ENCODE measurements at regions of chr2 and their contacts with region 1.

Region 1: DNA sequence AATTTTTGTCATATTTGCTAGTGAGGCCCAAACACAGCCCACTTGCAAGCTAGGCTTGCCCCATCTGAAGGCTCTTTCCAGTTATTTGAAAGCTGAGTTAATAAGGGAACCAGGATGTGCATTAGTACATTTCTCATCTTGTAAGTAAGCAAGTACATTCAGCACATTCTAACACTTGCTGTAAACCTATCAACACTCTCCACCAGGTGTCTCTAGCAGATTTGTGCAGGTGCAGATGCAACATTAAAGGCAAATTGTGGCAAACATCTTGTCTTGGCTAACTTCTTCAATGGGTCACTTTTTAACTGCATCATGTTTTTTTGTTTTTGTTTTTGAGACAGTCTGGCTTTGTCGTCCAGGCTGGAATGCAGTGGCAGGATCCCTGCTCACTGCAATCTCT is 25.3 kb upstream of the MFSD6 start:
- DNase-seq: no peak
- H3K4me3 ChIP-seq: no peak overlapping the region
- H3K27ac ChIP-seq: no peak overlapping the region
- H3K4me1 ChIP-seq: peaks cover 7% of the 10 kb centered on the region
- H3K27me3 ChIP-seq: no peaks in the 10 kb centered on the region
- CTCF ChIP-seq: peak; percentile 71

Region 2: DNA sequence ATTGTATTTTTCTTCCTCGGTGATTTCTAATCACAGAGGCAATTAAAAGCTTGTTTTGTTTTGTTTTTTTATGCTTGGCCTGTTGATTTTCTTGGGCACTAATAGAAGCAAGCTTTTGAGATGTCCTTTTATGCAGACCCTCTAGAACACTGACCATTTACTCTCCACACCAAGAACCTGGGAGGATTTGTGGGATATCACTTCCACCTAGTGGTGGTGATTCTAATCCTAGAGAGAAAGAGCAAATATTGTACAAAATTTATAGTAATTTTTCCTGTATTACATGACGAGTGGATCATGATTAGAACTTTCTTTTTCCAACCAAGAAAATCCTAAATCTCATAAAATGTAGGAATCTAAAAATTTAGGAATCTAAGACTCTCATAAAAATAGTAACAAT is 128.3 kb after region 1 on chr2:
- intact Hi-C with region 1: loop called (anchors 5 kb)
- DNase-seq: no peak
- H3K4me3 ChIP-seq: no peak overlapping the region
- H3K27ac ChIP-seq: no peak overlapping the region
- H3K4me1 ChIP-seq: peaks cover 8% of the 10 kb centered on the region
- H3K27me3 ChIP-seq: no peaks in the 10 kb centered on the region
- CTCF ChIP-seq: peak; percentile 67

Region 3: GRCh38 chr2:190583507-190584337 is 200.9 kb after region 1 on chr2:
- intact Hi-C with region 1: no loop called
- DNase-seq: peak; percentile 64
- H3K4me3 ChIP-seq: no peak overlapping the region
- H3K27ac ChIP-seq: peak overlapping the region; percentile 73
- H3K4me1 ChIP-seq: peaks cover 55% of the 10 kb centered on the region
- H3K27me3 ChIP-seq: no peaks in the 10 kb centered on the region
- CTCF ChIP-seq: no peak

Region 4: DNA sequence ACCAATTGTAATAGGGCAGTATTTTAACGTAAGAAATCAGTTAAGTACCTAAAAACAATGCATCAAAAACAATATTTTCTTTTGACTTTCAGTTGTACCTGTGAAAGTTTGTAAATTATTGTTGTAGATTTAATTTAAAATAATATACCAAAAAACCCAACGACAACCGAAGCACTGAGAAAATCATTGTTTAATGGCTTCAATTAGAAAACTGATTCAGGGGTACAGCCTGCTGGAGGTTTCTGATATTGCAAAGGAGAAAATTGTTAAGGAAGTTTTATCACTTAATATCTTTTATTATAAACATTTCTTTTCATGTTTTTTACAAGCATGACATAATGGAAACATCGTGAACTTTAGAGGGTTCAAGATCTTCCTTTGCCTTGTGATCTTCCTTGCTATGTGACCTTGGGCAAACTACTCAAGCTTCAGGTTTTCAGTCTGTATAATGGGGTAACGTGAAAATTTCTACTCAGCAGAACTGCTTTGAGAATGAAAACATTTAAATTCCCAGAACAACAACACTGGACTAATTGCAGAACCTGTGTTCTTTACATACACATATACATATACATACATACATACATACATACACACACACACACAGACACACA is 421.4 kb after region 1 on chr2:
- intact Hi-C with region 1: no loop called
- DNase-seq: no peak
- H3K4me3 ChIP-seq: no peak overlapping the region
- H3K27ac ChIP-seq: no peak overlapping the region
- H3K4me1 ChIP-seq: no peaks in the 10 kb centered on the region
- H3K27me3 ChIP-seq: no peaks in the 10 kb centered on the region
- CTCF ChIP-seq: peak; percentile 75

Measured in left ventricle myocardium inferior (tissue), 1 donor.